ENCODE measurements at regions of chr17 and their contacts with region 1.

Region 1: DNA sequence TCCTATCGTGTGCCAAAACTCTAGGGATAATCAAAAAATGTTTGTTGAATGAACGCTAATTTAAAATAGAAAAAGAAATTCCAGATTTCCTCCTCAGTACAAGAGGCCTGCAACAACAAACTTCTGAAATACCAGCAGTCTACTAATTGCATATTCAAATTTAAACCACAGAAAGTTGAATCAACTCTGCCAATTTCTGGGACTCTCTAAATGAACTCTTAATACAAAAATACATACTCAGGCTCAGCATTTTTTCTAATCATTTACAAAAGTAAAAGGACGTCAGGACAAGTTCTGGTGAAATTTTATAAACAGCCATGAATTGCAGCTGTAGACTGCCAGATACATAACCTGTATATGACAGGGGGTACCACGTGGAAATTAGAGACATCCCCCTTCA is 49.0 kb downstream of the KANSL1 start:
- DNase-seq: no peak
- H3K4me3 ChIP-seq: no peak overlapping the region
- H3K27me3 ChIP-seq: no peaks in the 10 kb centered on the region
- CTCF ChIP-seq: no peak

Region 2: GRCh38 chr17:45889579-45889978 is 254.7 kb before region 1 on chr17:
- CTCF ChIA-PET with region 1: no interaction called
- POLR2A ChIA-PET with region 1: no interaction called
- DNase-seq: no peak
- H3K4me3 ChIP-seq: no peak overlapping the region
- H3K27me3 ChIP-seq: no peaks in the 10 kb centered on the region
- CTCF ChIP-seq: no peak

Region 3: GRCh38 chr17:46154151-46154816 is 10.0 kb after region 1 on chr17:
- CTCF ChIA-PET with region 1: interaction called, 13 read pairs
- POLR2A ChIA-PET with region 1: no interaction called
- DNase-seq: no peak
- H3K4me3 ChIP-seq: no peak overlapping the region
- H3K27me3 ChIP-seq: no peaks in the 10 kb centered on the region
- CTCF ChIP-seq: no peak

Measured in BJ (cell line).